Panc1 (cell line): ENCODE measurements at regions of chr9 and their contacts with region 1.

Region 1: DNA sequence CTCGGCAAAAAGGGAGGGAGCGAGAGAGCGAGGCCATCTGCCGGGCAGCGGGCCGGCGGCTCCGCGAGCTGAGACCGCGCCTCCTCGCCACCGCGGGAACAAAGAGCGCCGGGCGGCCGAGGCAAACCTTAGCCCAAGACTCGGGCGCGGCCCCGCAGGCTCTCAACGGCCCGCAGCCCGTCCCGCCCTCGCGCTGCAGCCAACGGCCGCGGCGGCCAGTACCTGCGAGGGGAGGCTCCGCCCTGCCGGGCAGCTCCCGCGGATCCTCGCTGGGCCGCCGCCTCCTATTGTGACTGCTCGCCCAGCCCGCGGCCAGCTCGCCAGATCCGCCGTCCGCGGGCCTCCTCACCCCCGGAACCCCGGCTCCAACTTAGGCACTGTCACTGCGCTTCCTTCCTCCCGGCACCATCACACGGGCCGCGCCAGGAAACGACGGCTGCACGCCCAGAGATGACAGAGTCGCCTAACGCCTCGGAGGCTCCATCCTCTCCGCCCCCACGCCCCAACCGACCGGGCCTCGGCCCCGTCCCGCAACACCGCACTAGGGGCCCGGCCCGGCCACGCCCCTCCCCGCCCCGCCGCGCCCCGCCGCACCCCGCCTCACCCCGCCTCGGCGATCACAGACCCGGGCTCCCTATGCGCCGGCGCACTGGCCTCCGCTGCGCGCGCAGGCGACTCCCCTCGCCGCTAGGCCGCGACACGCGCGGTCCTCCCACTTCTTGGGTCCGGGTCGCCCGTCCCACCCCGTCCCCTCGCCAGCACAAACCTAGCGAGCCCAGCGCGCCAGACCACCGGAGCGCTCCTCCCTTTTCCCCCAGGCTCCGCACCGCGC is 479 bp upstream of the RNF38 start:
- DNase-seq: no peak
- ATAC-seq: peak; percentile 94
- H3K4me3 ChIP-seq: peak overlapping the region; percentile 79 to 90
- H3K27ac ChIP-seq: peak overlapping the region; percentile 95
- H3K4me1 ChIP-seq: peaks cover 29% of the 10 kb centered on the region
- H3K27me3 ChIP-seq: no peaks in the 10 kb centered on the region
- CTCF ChIP-seq: peak; percentile 7; the same call in 1 of the 2 replicates

Region 2: DNA sequence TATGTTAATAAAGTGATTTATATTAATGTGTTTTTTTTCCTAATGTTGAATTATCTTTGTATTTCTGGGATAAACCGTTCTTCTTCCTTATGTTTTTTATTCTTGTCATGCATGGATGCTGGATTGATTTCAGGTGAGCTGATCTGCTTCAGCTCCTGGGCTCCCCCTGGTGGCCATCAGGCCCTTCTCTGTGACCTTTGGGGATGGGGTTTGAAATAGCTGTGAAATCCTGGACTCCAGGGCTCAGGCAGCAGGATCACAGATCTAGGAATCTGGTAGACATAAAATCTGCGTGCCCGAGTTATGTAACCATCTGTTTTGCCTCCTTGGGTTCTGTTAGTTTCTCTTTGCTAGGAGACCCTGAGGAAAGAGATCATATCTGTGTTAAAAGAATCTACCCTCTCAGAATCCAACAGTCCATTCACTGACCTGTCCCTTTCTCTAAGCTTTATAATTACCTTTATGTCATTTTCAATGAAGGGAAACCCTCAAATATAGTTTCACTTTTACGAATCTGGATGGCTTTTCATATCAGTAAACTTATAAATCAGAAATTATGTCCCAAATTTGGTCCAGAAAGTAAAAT is 518.2 kb before region 1 on chr9:
- CTCF ChIA-PET with region 1: no interaction called
- POLR2A ChIA-PET with region 1: no interaction called
- in situ Hi-C with region 1: no loop called
- intact Hi-C with region 1: no loop called
- DNase-seq: peak; percentile 72
- ATAC-seq: peak; percentile 99
- H3K4me3 ChIP-seq: no peak overlapping the region
- H3K27ac ChIP-seq: no peak overlapping the region
- H3K4me1 ChIP-seq: peaks cover 5% of the 10 kb centered on the region; the same call in 1 of the 2 replicates
- H3K27me3 ChIP-seq: no peaks in the 10 kb centered on the region; the same call in 1 of the 2 replicates
- CTCF ChIP-seq: peak; percentile 99

Region 3: DNA sequence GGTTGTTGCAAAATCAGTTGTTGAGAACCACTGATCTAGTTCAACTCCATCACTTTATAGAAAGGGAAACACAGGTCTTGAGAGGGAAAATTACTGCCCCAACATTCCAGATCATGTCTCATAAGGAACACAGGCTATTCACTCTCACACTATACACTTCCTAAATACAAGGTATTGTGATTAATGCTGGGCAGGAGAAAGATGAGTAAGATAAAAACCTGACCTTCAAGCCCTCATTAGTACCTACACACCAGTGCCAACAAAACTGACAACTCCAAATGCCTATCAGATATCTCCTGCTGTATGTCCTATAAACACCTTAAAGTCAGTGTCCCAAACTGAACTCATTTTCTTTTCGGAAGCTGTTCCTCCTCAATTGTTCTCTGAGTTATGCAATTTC is 150.5 kb before region 1 on chr9:
- CTCF ChIA-PET with region 1: interaction called, 5 read pairs
- POLR2A ChIA-PET with region 1: interaction called, 15 read pairs
- in situ Hi-C with region 1: no loop called
- intact Hi-C with region 1: no loop called
- DNase-seq: no peak
- ATAC-seq: peak; percentile 17; the same call in 1 of the 2 replicates
- H3K4me3 ChIP-seq: no peak overlapping the region
- H3K27ac ChIP-seq: peak overlapping the region; percentile 19; the same call in 1 of the 2 replicates
- H3K4me1 ChIP-seq: peaks cover 8% of the 10 kb centered on the region; the same call in 1 of the 2 replicates
- H3K27me3 ChIP-seq: no peaks in the 10 kb centered on the region
- CTCF ChIP-seq: no peak

Region 4: GRCh38 chr9:36258208-36258988 is 142.2 kb before region 1 on chr9 and contains the start of gene GNE:
- CTCF ChIA-PET with region 1: no interaction called
- POLR2A ChIA-PET with region 1: interaction called, 10 read pairs
- in situ Hi-C with region 1: no loop called
- intact Hi-C with region 1: no loop called
- DNase-seq: peak; percentile 89
- ATAC-seq: peak; percentile 96
- H3K4me3 ChIP-seq: peak within 1 kb of the TSS; percentile 62 to 63
- H3K27ac ChIP-seq: peak within 1 kb of the TSS; percentile 98
- H3K4me1 ChIP-seq: peaks cover 28% of the 10 kb centered on the region
- H3K27me3 ChIP-seq: no peaks in the 10 kb centered on the region
- CTCF ChIP-seq: no peak
- total RNA-seq, gene GNE: 107 TPM

Region 5: GRCh38 chr9:36317764-36318163 is 82.8 kb before region 1 on chr9:
- CTCF ChIA-PET with region 1: no interaction called
- POLR2A ChIA-PET with region 1: no interaction called
- in situ Hi-C with region 1: no loop called
- intact Hi-C with region 1: no loop called
- DNase-seq: no peak
- ATAC-seq: peak; percentile 13
- H3K4me3 ChIP-seq: no peak overlapping the region
- H3K27ac ChIP-seq: peak overlapping the region; percentile 67
- H3K4me1 ChIP-seq: peaks cover 36% of the 10 kb centered on the region
- H3K27me3 ChIP-seq: no peaks in the 10 kb centered on the region
- CTCF ChIP-seq: no peak

Region 6: DNA sequence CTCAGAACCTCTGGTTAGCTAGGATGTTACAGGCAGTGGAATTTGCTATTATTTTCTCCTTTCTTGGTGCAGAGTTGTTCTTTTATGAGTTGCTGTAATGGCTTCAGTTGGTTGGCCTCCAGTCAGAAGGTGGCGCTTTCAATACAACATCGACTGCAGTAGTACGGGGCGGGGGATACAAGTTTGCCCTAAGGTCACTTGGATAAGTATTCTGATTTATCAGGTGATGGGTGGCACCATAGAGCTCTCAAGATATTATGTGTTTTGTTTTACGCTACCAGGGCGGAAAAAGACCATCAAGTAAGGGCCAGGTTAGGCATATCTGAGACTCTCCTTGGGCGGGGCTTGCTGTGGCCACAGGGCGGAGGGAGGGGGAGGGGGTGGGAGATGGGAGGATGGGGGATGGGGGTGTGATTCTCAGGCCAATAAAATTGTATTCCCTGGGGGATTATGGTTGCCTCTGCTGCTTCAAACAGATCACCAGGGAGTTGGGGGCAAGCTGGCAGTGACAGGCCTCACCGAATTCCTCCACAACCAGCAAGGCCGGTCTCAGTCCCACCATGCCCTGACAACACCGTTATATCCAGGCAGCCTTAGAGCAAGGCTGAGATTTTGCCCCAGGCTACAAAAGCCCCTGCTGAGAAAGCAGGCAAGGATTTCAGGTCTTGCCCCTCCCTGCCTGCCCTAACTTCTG is 15.4 kb after region 1 on chr9:
- CTCF ChIA-PET with region 1: no interaction called
- POLR2A ChIA-PET with region 1: no interaction called
- in situ Hi-C with region 1: no loop called
- intact Hi-C with region 1: no loop called
- DNase-seq: no peak
- ATAC-seq: no peak
- H3K4me3 ChIP-seq: no peak overlapping the region
- H3K27ac ChIP-seq: no peak overlapping the region
- H3K4me1 ChIP-seq: peaks cover 24% of the 10 kb centered on the region
- H3K27me3 ChIP-seq: no peaks in the 10 kb centered on the region
- CTCF ChIP-seq: no peak